WTC11 (cell line): ENCODE measurements at regions of chr6 and their contacts with region 1.

Region 1: DNA sequence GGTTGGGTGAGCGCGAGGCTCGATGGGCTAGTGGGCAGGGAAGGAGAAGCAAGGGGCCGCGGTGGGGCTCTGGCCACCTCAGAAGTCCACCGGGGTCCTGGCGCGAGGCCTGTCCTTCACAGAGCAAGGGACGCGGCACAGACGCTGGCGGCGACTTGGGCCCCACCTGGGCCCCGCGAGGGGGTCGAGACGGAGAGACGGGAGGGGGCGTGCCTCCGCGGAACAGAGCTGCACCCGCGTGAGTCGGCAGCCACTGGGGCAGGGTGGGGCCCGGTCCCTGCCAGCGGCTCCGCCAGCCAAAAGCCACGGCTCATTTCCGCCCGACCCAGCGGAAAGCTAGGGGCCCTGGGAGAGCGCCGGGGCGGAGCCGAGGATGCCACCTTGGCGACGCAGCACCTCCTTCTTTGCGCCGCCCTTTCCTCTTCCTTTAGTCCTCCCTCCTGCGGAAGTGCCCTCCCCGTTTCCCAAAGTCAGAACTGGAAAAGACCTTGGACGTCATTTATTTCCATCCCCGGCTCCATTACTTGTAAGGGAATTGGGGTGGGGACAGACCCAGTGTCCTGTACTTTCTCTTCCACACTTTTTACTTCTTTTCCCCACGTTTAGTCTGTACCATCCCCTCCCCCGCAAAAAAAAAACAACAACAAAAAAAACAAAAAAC is at the start of gene CUL7:
- DNase-seq: peak; percentile 86
- ATAC-seq: peak; percentile 93
- H3K4me3 Mint-ChIP-seq: peak within 1 kb of the TSS; percentile 91
- H3K27ac Mint-ChIP-seq: peak within 1 kb of the TSS; percentile 95
- H3K4me1 Mint-ChIP-seq: peaks cover 30% of the 10 kb centered on the region
- H3K27me3 Mint-ChIP-seq: no peaks in the 10 kb centered on the region
- CTCF ChIP-seq: no peak
- total RNA-seq, gene CUL7: 20.8 to 27.9 TPM (median 27.0 TPM) in 3 replicates

Region 2: GRCh38 chr6:43021270-43022047 is 32.2 kb before region 1 on chr6 and contains the start of gene RRP36:
- CTCF ChIA-PET with region 1: interaction called, 4 read pairs
- POLR2A ChIA-PET with region 1: interaction called, 12 read pairs
- DNase-seq: peak; percentile 79
- ATAC-seq: peak; percentile 85
- H3K4me3 Mint-ChIP-seq: peak within 1 kb of the TSS; percentile 98
- H3K27ac Mint-ChIP-seq: peak within 1 kb of the TSS; percentile 96
- H3K4me1 Mint-ChIP-seq: peaks cover 8% of the 10 kb centered on the region
- H3K27me3 Mint-ChIP-seq: no peaks in the 10 kb centered on the region
- CTCF ChIP-seq: no peak
- total RNA-seq, gene RRP36: 65.6 to 81.0 TPM (median 67.9 TPM) in 3 replicates

Region 3: GRCh38 chr6:43174263-43175112 is 120.8 kb after region 1 on chr6:
- CTCF ChIA-PET with region 1: no interaction called
- POLR2A ChIA-PET with region 1: interaction called, 13 read pairs
- DNase-seq: peak; percentile 97
- ATAC-seq: peak; percentile 70
- H3K4me3 Mint-ChIP-seq: peak overlapping the region; percentile 94
- H3K27ac Mint-ChIP-seq: peak overlapping the region; percentile 86
- H3K4me1 Mint-ChIP-seq: peaks cover 31% of the 10 kb centered on the region
- H3K27me3 Mint-ChIP-seq: peaks cover 10% of the 10 kb centered on the region
- CTCF ChIP-seq: no peak